Ovary (tissue), 10 donors: ENCODE measurements at regions of chr10 and their contacts with region 1.

Region 1: DNA sequence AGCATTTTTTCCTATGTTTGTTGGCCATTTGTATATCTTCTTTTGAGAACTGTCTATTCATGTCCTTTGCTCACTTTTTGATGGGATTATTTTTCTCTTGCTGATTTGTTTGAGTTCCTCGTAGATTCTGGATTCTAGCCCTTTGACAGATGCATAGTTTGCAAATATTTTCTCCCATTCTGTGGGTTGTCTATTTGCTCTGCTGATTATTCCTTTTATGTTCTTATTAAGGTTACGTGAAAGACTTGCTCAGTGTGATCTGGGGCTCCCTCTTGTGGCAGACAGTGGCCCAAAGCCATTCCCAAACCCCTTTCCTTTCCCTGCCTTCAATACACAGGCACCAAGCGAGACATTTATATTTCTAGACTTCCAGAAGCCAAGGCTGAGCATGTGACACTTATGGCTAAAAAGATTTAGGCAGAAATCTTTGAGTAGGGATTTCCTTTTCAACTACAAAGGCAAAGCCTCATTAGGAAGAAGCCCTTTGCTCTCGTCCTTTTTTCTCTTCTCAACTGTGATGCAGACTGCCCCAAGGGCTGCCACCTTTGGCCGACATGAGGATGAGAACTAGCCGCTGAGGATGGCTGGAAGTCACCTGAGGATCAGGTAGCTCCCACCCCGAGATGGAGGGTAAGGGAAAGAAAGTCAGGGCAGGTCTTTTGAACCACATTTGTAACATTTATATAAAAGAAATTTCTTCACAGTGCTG is 23.6 kb downstream of the ST8SIA6 start:
- DNase-seq: peak; percentile 79 to 89 (median 87)
- H3K4me3 ChIP-seq: no peak overlapping the region
- H3K27ac ChIP-seq: no peak overlapping the region
- H3K4me1 ChIP-seq: peaks cover 1% of the 10 kb centered on the region
- H3K27me3 ChIP-seq: no peaks in the 10 kb centered on the region
- CTCF ChIP-seq: peak; percentile 66 to 75 (median 75)
- EP300 ChIP-seq: no peak
- POLR2A ChIP-seq: no peak

Region 2: DNA sequence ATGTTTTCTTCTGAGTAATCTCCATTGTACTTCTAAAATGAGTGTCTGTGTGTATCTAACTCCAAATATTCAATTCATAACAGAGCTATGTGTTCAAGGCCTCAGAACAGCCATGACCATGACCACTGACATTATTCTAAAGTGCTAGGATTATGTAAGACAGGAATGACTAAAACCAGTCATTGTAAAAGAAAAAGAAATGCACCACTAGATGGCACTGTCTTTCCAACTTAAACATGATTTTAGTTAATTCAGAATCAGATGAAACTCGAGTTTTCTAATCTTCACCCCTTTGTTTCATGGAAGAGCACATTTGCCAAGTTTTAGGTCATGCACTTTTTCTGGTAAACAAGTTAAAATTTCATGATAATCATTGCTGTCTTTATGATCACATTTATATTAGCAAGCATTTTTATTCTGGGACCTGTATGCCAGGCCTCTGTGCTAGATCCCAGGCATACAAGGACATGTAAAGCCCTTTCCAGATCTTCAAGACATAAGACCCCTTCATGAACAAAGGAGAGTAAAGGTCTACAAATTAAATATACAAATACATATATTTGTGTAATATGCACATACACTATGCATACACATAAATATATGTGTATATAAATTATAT is 587.4 kb before region 1 on chr10:
- intact Hi-C with region 1: loop called in 2 of 4 experiments (anchors 10 kb)
- DNase-seq: no peak
- H3K4me3 ChIP-seq: no peak overlapping the region
- H3K27ac ChIP-seq: peak overlapping the region in 1 of 2 donors; percentile 72
- H3K4me1 ChIP-seq: peaks cover 3% of the 10 kb centered on the region
- H3K27me3 ChIP-seq: no peaks in the 10 kb centered on the region
- CTCF ChIP-seq: peak; percentile 43 to 73 (median 64)
- EP300 ChIP-seq: no peak
- POLR2A ChIP-seq: no peak

Region 3: DNA sequence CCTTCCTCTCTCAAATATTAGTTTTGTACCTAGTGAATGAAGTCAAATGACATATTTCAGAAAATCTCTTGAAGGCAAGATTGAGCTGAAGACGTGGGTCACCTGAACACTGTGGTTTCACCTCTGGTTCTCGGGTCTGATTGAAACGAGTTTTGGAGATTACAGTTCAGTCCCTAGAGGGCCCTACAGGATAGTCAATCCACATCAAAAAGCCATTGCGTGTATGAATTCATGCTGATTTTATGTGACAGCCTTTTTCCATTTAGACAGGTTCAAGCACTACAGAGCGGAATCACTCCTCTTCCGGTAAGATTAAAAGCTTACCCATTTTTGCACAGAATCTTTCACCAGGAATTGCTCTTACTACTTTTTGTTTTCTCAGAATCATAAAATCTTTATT is 140.6 kb before region 1 on chr10:
- intact Hi-C with region 1: loop called in 3 of 4 experiments (anchors 5 to 10 kb)
- DNase-seq: no peak
- H3K4me3 ChIP-seq: no peak overlapping the region
- H3K27ac ChIP-seq: no peak overlapping the region
- H3K4me1 ChIP-seq: no peaks in the 10 kb centered on the region
- H3K27me3 ChIP-seq: no peaks in the 10 kb centered on the region
- CTCF ChIP-seq: peak in 2 of 3 donors; percentile 24 to 28
- EP300 ChIP-seq: no peak
- POLR2A ChIP-seq: no peak